ENCODE measurements at regions of chr19 and their contacts with region 1.

Region 1: DNA sequence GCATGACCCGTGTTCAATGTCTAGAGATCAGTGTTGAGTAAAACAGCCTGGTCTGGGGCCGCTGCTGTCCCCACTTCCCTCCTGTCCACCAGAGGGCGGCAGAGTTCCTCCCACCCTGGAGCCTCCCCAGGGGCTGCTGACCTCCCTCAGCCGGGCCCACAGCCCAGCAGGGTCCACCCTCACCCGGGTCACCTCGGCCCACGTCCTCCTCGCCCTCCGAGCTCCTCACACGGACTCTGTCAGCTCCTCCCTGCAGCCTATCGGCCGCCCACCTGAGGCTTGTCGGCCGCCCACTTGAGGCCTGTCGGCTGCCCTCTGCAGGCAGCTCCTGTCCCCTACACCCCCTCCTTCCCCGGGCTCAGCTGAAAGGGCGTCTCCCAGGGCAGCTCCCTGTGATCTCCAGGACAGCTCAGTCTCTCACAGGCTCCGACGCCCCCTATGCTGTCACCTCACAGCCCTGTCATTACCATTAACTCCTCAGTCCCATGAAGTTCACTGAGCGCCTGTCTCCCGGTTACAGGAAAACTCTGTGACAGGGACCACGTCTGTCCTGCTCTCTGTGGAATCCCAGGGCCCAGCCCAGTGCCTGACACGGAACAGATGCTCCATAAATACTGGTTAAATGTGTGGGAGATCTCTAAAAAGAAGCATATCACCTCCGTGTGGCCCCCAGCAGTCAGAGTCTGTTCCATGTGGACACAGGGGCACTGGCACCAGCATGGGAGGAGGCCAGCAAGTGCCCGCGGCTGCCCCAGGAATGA is 1.5 kb upstream of the CEACAM5 start:
- DNase-seq: peak; percentile 80
- H3K4me3 Mint-ChIP-seq: peak overlapping the region; percentile 57
- H3K27ac Mint-ChIP-seq: no peak overlapping the region
- H3K4me1 Mint-ChIP-seq: peaks cover 5% of the 10 kb centered on the region
- H3K27me3 Mint-ChIP-seq: peaks cover 68% of the 10 kb centered on the region

Region 2: GRCh38 chr19:41626877-41627276 is 80.0 kb before region 1 on chr19 and contains the start of gene CEACAM4:
- CTCF ChIA-PET with region 1: no interaction called
- DNase-seq: no peak
- H3K4me3 Mint-ChIP-seq: no peak within 1 kb of the TSS
- H3K27ac Mint-ChIP-seq: no peak within 1 kb of the TSS
- H3K4me1 Mint-ChIP-seq: no peaks in the 10 kb centered on the region
- H3K27me3 Mint-ChIP-seq: peaks cover 54% of the 10 kb centered on the region

Region 3: DNA sequence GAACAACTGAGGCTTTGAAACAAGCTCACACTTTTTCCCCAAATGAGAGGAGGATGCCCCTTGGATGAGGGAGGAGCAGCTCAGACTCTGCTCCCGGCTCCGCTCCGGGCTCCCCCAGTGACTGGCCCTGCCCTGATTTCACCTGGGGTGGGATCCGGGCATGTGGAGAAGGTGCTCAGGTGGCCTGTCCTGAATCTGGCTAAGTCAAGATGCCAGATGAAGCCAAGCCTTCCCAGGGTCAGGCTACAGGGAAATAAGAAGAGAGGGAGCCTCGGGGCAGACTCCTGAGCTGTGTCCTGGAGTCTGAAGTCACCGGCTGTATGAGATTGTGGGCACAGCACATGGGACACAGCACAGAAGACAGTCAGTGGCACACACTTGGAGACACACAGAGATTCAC is 11.8 kb after region 1 on chr19:
- CTCF ChIA-PET with region 1: interaction called, 11 read pairs
- DNase-seq: no peak
- H3K4me3 Mint-ChIP-seq: no peak overlapping the region
- H3K27ac Mint-ChIP-seq: no peak overlapping the region
- H3K4me1 Mint-ChIP-seq: no peaks in the 10 kb centered on the region
- H3K27me3 Mint-ChIP-seq: peaks cover 64% of the 10 kb centered on the region

Region 4: DNA sequence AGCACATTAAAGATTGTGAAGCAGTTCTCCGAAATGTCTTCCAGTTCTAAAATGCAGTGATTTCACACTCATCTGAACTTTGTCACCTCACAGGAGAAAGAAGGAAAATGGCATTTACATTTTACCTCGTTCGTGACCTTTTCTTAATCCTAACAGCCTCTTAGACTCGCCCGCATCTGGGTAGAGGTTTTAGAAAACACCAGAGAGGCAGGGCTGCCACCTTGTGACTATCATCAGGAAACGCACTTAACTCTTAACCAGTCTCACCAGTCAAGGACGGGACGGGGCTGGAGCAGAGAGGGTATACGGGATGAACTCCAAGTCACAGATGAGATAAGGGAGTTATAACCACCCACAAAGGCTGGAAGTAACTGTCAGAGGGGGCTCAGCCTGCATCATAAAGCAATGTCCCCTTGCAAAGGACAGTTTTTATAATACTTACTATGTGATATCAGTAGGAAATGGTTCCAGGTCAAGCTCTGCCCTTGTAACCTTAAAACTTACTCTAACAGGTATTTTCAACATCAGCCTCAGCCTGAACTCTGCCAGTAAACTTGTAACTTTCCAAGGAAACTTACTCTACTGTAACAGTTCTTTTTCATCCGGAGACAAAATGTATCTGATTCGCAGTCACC is 39.8 kb after region 1 on chr19:
- CTCF ChIA-PET with region 1: interaction called, 28 read pairs
- DNase-seq: peak; percentile 60
- H3K4me3 Mint-ChIP-seq: no peak overlapping the region
- H3K27ac Mint-ChIP-seq: no peak overlapping the region
- H3K4me1 Mint-ChIP-seq: peaks cover 8% of the 10 kb centered on the region
- H3K27me3 Mint-ChIP-seq: peaks cover 78% of the 10 kb centered on the region